ENCODE measurements at regions of chr5 and their contacts with region 1.

Region 1: GRCh38 chr5:126339215-126339805 is 83.9 kb upstream of the GRAMD2B start:
- DNase-seq: peak; percentile 46
- H3K4me3 Mint-ChIP-seq: no peak overlapping the region
- H3K27ac Mint-ChIP-seq: no peak overlapping the region
- H3K4me1 Mint-ChIP-seq: no peaks in the 10 kb centered on the region
- H3K27me3 Mint-ChIP-seq: peaks cover 14% of the 10 kb centered on the region

Region 2: DNA sequence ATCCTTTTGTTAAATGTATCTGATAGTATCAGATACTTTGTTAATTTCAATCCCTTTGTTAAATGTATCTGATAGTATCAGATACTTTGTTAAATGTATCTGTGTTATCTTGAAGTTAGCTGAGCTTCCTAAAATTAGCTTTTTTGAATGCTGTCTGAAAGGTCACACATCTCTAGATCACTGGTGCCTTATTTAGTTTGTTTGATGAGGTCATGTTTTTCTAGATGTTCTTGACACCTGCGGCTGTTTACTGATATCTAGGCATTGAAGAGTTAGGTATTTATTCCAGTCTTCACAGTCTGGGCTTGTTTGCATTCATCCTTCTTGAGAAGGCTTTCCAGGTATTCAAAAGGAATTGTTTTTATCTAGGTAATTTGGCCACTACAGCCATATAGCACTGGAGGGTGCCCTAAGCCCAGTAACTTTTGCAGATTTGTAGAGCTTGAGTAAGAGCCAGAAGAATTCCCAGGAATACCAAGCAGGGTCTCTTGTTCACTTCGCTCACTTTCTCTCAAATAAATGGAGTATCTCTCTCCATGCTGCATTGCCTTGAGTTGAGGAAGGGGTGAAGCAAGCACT is 351.5 kb before region 1 on chr5:
- CTCF ChIA-PET with region 1: no interaction called
- POLR2A ChIA-PET with region 1: no interaction called
- DNase-seq: no peak
- H3K4me3 Mint-ChIP-seq: no peak overlapping the region
- H3K27ac Mint-ChIP-seq: no peak overlapping the region
- H3K4me1 Mint-ChIP-seq: no peaks in the 10 kb centered on the region
- H3K27me3 Mint-ChIP-seq: no peaks in the 10 kb centered on the region

Region 3: GRCh38 chr5:126354012-126354857 is 14.9 kb after region 1 on chr5:
- CTCF ChIA-PET with region 1: interaction called, 13 read pairs
- POLR2A ChIA-PET with region 1: no interaction called
- DNase-seq: no peak
- H3K4me3 Mint-ChIP-seq: no peak overlapping the region
- H3K27ac Mint-ChIP-seq: no peak overlapping the region
- H3K4me1 Mint-ChIP-seq: peaks cover 7% of the 10 kb centered on the region
- H3K27me3 Mint-ChIP-seq: peaks cover 5% of the 10 kb centered on the region

Region 4: GRCh38 chr5:126531543-126532120 is 192.3 kb after region 1 on chr5:
- CTCF ChIA-PET with region 1: interaction called, 28 read pairs
- POLR2A ChIA-PET with region 1: no interaction called
- DNase-seq: no peak
- H3K4me3 Mint-ChIP-seq: no peak overlapping the region
- H3K27ac Mint-ChIP-seq: no peak overlapping the region
- H3K4me1 Mint-ChIP-seq: no peaks in the 10 kb centered on the region
- H3K27me3 Mint-ChIP-seq: peaks cover 5% of the 10 kb centered on the region

Region 5: DNA sequence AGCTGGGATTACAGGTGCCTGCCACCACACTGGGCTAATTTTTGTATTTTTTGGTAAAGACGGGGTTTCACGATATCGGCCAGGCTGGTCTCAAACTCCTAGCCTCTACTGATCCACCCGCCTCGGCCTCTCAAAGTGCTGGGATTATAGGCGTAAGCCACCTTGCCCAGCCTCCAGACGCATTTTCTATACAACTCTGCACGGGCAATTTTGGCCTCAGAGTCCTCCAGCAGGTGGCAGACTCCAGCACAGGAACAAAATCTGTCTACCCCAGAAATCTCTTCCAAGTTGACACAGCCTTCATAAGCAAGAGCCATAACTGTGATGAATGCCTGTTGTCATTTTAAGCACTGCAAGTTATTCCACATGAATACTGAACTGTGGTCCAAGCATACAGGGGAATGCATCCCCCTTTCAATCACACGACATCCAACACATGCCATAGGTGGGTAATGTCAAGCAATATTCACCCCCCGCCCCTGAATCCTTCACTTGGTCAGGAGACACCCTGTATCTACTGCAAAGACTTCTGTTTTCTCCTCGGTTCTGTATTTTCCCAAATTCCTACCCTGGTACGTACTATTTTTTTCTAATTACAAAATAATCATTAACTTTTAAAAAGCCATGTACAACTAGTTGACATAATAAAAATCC is 204.9 kb after region 1 on chr5:
- CTCF ChIA-PET with region 1: interaction called, 53 read pairs
- POLR2A ChIA-PET with region 1: no interaction called
- DNase-seq: peak; percentile 47
- H3K4me3 Mint-ChIP-seq: no peak overlapping the region
- H3K27ac Mint-ChIP-seq: no peak overlapping the region
- H3K4me1 Mint-ChIP-seq: no peaks in the 10 kb centered on the region
- H3K27me3 Mint-ChIP-seq: peaks cover 2% of the 10 kb centered on the region

Region 6: DNA sequence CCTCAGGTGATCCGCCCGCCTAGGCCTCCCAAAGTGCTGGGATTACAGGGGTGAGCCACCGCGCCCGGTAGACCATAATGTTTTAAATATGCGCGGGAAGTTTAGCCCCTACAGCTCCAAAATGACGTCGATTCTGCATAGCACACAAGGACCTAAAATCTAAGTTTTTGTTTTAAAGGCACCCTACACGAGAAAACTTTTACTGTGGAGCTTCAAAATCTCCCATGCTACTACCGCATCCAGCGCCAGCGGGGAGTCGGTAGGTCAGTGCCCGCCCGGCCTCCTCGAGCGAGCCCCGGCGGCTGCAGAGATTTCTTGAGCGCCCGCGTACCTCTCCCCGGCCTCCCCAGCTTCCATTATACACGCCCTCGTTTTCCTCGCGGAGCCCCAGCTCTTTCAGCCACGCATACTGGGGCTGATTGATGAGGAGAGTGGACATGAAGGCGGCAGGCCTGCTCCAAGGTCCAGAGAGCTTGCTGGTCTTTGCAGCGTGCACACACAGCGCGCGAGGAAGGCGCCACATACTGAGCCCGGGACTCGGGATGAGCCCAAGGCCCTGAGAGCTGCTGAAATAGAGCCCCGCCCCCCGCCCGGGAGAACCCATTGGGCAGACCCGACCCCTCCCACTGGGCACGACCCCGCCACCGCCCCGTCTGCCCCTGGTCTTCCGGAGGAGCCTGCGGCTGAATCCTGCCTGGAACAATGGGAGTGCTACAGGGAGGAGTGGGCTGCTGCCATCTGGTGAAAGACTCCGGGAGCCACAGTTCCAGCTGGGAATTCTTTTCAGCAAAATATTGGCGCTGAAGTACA is 255.6 kb after region 1 on chr5 and contains the start of gene ALDH7A1:
- CTCF ChIA-PET with region 1: interaction called, 12 read pairs
- POLR2A ChIA-PET with region 1: no interaction called
- DNase-seq: no peak
- H3K4me3 Mint-ChIP-seq: peak within 1 kb of the TSS; percentile 59
- H3K27ac Mint-ChIP-seq: no peak within 1 kb of the TSS
- H3K4me1 Mint-ChIP-seq: peaks cover 11% of the 10 kb centered on the region
- H3K27me3 Mint-ChIP-seq: peaks cover 25% of the 10 kb centered on the region
- total RNA-seq, gene ALDH7A1: 0.71 to 1.0 TPM